ENCODE measurements at regions of chr11 and their contacts with region 1.

Region 1: DNA sequence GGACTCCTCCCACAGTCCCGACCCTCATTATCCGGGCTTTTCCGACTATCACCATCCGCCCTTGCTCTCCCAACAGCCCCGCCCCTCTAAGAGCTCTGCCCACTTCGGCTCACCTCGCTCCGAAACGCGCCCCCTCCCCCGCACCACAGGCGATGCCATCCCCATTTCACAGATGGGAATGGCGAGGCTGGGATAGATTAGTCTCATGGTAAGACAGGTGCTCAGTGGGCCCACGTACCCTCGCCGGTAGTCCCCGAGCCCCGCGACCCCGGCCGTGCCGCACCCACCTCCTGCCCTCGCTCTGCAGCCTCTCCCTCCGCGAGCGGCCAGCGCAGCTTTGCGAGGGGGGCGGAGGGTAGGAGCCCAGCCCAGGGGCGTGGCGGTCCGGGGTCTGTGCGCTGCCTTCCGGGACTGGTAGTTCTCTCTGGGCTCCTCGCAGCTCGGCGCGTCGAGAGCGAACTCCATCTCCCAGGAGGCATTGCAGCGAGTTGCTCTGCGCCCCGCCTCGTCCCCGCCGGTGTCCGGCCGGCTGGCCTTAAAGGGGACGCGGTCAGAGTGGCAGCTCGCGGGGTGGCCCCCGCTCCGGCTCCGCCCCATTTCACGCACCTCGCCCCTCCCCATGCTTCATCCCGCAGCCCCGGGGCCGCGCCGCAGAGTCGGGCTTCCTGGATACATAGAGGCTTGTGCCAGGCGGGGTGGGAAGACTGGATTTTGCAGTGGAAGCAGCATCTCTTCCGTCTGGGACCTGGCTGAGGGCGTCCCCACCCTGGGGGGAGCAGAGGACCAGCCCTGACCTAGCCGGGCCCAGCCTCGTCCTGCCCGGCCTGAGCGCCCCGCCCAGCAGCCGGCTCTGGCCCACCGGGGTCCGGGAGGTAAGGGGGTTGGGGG is at the starts of genes KCTD21 and USP35:
- DNase-seq: peak; percentile 78 to 95 (median 91)
- ATAC-seq: peak; percentile 79
- H3K4me3 ChIP-seq: peak within 1 kb of the TSS; percentile 90 to 100
- H3K4me3 Mint-ChIP-seq: peak within 1 kb of the TSS; percentile 97
- H3K27ac ChIP-seq: peak within 1 kb of the TSS; percentile 73 to 75
- H3K27ac Mint-ChIP-seq: peak within 1 kb of the TSS; percentile 98
- H3K4me1 ChIP-seq: peaks cover 37% of the 10 kb centered on the region
- H3K4me1 Mint-ChIP-seq: peaks cover 55% of the 10 kb centered on the region
- H3K27me3 ChIP-seq: no peaks in the 10 kb centered on the region
- H3K27me3 Mint-ChIP-seq: no peaks in the 10 kb centered on the region
- CTCF ChIP-seq: no peak
- total RNA-seq, gene KCTD21: 3.0 to 3.4 TPM
- total RNA-seq, gene USP35: 22.3 to 23.4 TPM

Region 2: GRCh38 chr11:78079232-78080083 is 109.1 kb before region 1 on chr11 and contains the start of gene NDUFC2:
- CTCF ChIA-PET with region 1: no interaction called
- POLR2A ChIA-PET with region 1: no interaction called
- intact Hi-C with region 1: loop called in 1 of 2 experiments (anchors 1 kb)
- DNase-seq: peak; percentile 30 to 83 (median 66)
- ATAC-seq: peak; percentile 82
- H3K4me3 ChIP-seq: peak within 1 kb of the TSS; percentile 74 to 97
- H3K4me3 Mint-ChIP-seq: peak within 1 kb of the TSS; percentile 96
- H3K27ac ChIP-seq: peak within 1 kb of the TSS; percentile 76 to 78
- H3K27ac Mint-ChIP-seq: peak within 1 kb of the TSS; percentile 96
- H3K4me1 ChIP-seq: peaks cover 56% of the 10 kb centered on the region
- H3K4me1 Mint-ChIP-seq: peaks cover 63% of the 10 kb centered on the region
- H3K27me3 ChIP-seq: no peaks in the 10 kb centered on the region
- H3K27me3 Mint-ChIP-seq: no peaks in the 10 kb centered on the region
- CTCF ChIP-seq: no peak
- total RNA-seq, gene NDUFC2: 72.2 to 76.3 TPM

Region 3: DNA sequence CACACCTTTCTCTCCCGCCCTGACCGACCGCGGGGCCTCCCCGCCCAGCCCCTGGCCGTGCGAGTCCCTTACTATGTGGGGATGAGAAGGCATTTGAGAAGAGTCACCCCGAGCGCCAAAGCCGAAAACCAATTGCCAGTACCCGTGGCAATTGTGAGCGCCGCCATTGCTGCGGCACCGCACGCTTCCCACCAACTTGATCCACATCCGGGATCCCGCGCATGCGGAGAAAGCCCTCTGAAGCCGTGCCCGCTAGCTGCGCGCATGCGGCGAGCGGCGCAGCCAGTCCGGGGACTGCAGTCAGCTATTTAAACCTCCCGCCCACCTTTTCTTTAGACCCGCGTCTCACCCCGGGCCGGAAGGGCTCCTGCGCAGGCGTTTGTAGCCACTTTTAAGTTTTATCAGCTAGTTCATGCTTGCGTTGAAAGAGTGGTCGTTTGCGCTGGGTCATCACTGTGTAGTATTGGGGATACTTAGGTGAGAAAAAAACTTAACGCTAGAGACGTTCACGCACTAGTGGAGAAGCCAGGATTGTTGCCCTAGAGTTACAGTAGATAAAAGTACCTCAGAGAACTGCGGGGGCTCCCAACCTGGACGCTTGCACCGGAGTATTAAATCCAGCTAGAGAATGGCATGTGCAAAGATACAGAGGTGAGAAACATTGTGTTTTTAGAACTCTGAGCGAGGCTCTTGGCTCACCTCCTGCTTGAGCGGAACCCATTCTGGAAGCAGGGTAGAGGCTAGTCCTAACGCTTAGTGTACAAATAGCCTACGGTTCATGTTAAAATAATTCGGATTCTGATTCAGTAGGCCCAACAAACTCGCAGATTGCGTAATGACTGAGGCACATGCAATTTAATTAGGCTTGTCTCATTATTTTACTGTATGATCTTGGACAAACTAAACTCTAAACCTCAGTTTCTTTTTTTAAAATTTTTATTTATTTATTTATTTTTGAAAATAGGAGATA is 48.8 kb before region 1 on chr11 and contains the start of gene ALG8:
- CTCF ChIA-PET with region 1: interaction called, 3 read pairs
- POLR2A ChIA-PET with region 1: interaction called, 16 read pairs
- intact Hi-C with region 1: loop called (anchors 1 kb)
- DNase-seq: peak; percentile 96 to 99 (median 97)
- ATAC-seq: peak; percentile 95
- H3K4me3 ChIP-seq: peak within 1 kb of the TSS; percentile 92
- H3K4me3 Mint-ChIP-seq: peak within 1 kb of the TSS; percentile 95
- H3K27ac ChIP-seq: peak within 1 kb of the TSS; percentile 74 to 90
- H3K27ac Mint-ChIP-seq: peak within 1 kb of the TSS; percentile 97
- H3K4me1 ChIP-seq: peaks cover 19% of the 10 kb centered on the region
- H3K4me1 Mint-ChIP-seq: peaks cover 35% of the 10 kb centered on the region
- H3K27me3 ChIP-seq: no peaks in the 10 kb centered on the region
- H3K27me3 Mint-ChIP-seq: no peaks in the 10 kb centered on the region
- CTCF ChIP-seq: no peak
- total RNA-seq, gene ALG8: 14.2 to 17.5 TPM

Region 4: GRCh38 chr11:78202733-78203167 is 14.2 kb after region 1 on chr11:
- CTCF ChIA-PET with region 1: interaction called, 4 read pairs
- POLR2A ChIA-PET with region 1: interaction called, 8 read pairs
- intact Hi-C with region 1: loop called (anchors 1 kb)
- DNase-seq: peak; percentile 31 to 90 (median 69)
- ATAC-seq: peak; percentile 79
- H3K4me3 ChIP-seq: peak overlapping the region; percentile 28 to 56
- H3K4me3 Mint-ChIP-seq: peak overlapping the region; percentile 82
- H3K27ac ChIP-seq: peak overlapping the region; percentile 67 to 89
- H3K27ac Mint-ChIP-seq: peak overlapping the region; percentile 98
- H3K4me1 ChIP-seq: peaks cover 28% of the 10 kb centered on the region
- H3K4me1 Mint-ChIP-seq: peaks cover 47% of the 10 kb centered on the region
- H3K27me3 ChIP-seq: no peaks in the 10 kb centered on the region
- H3K27me3 Mint-ChIP-seq: no peaks in the 10 kb centered on the region
- CTCF ChIP-seq: no peak

Region 5: GRCh38 chr11:78574386-78575381 is 386.2 kb after region 1 on chr11 and contains the start of gene NARS2:
- CTCF ChIA-PET with region 1: no interaction called
- POLR2A ChIA-PET with region 1: no interaction called
- intact Hi-C with region 1: loop called (anchors 1 kb)
- DNase-seq: peak; percentile 94 to 99 (median 98)
- ATAC-seq: peak; percentile 98
- H3K4me3 ChIP-seq: peak within 1 kb of the TSS; percentile 73 to 95
- H3K4me3 Mint-ChIP-seq: peak within 1 kb of the TSS; percentile 94
- H3K27ac ChIP-seq: peak within 1 kb of the TSS; percentile 77 to 88
- H3K27ac Mint-ChIP-seq: peak within 1 kb of the TSS; percentile 99
- H3K4me1 ChIP-seq: peaks cover 16% of the 10 kb centered on the region
- H3K4me1 Mint-ChIP-seq: peaks cover 39% of the 10 kb centered on the region
- H3K27me3 ChIP-seq: no peaks in the 10 kb centered on the region
- H3K27me3 Mint-ChIP-seq: peaks cover 4% of the 10 kb centered on the region
- CTCF ChIP-seq: no peak
- total RNA-seq, gene NARS2: 6.3 to 8.3 TPM

Measured in CD8-positive, alpha-beta T cell (primary cell).